K562 (cell line): ENCODE measurements at regions of chr3 and their contacts with region 1.

Region 1: DNA sequence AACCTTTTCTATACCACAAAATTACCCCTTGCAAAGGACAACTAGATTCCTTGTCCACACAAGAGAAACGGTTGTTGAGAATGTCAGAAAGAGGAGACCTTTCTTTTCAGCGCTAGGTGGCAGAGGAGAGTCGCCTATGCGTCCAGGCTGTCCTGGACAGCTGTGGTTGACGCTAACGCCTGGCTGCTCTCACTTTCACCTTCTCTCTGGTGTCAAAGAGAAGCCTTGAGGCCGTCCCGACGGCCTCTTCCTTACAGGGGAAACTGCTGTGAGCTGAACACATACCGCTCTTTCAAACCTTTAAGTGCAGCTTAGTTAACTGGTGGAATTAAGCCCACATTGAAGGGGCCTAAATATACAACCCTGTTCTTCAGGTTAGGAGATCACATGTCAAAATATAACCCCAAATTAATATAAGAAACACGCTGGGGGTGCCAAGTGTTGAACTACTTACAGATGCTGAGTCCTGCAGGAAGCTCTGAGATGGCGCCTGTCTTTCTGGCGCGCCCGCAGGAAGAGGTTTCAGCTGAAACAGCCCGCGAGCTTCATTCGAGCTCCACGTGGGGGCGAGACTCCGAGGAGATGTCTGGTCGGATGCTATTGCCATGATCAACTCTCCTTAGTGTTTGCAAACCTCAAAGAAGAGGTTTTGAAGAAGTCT is 26.1 kb upstream of the KBTBD8 start:
- DNase-seq: peak; percentile 60 to 85 (median 65)
- ATAC-seq: peak; percentile 99
- H3K4me3 ChIP-seq: peak overlapping the region; percentile 17; the same call in 1 of the 2 replicates
- H3K27ac ChIP-seq: no peak overlapping the region
- H3K4me1 ChIP-seq: peaks cover 0 to 3% of the 10 kb centered on the region in 2 experiments; a peak in 1 of 5 replicates
- H3K27me3 ChIP-seq: no peaks in the 10 kb centered on the region; a peak in 1 of 5 replicates
- CTCF ChIP-seq: peak; percentile 76 to 84 (median 80)
- EP300 ChIP-seq: no peak
- POLR2A ChIP-seq: no peak
- RAD21 ChIP-seq: peak; percentile 85 to 91

Region 2: GRCh38 chr3:66362541-66362941 is 609.5 kb before region 1 on chr3:
- CTCF ChIA-PET with region 1: no interaction called
- POLR2A ChIA-PET with region 1: no interaction called
- in situ Hi-C with region 1: no loop called
- intact Hi-C with region 1: no loop called
- DNase-seq: no peak
- ATAC-seq: no peak
- H3K4me3 ChIP-seq: no peak overlapping the region
- H3K27ac ChIP-seq: no peak overlapping the region
- H3K4me1 ChIP-seq: no peaks in the 10 kb centered on the region
- H3K27me3 ChIP-seq: no peaks in the 10 kb centered on the region
- CTCF ChIP-seq: no peak
- EP300 ChIP-seq: no peak
- POLR2A ChIP-seq: no peak
- RAD21 ChIP-seq: no peak

Region 3: GRCh38 chr3:66989860-66990665 is 18.0 kb after region 1 on chr3:
- CTCF ChIA-PET with region 1: no interaction called
- POLR2A ChIA-PET with region 1: interaction called, 4 read pairs
- in situ Hi-C with region 1: no loop called
- intact Hi-C with region 1: loop called (anchors 2 kb)
- DNase-seq: peak; percentile 20 to 40 (median 25)
- ATAC-seq: peak; percentile 85
- H3K4me3 ChIP-seq: no peak overlapping the region
- H3K27ac ChIP-seq: 0 out of 3 replicates have a peak overlapping the region, but pooled peaks have one; percentile 14
- H3K4me1 ChIP-seq: peaks cover 0 to 13% of the 10 kb centered on the region in 2 experiments; a peak in 2 of 5 replicates
- H3K27me3 ChIP-seq: no peaks in the 10 kb centered on the region
- CTCF ChIP-seq: peak in 2 of 3 experiments; percentile 44 to 68; a peak in 3 of 6 replicates
- EP300 ChIP-seq: no peak
- POLR2A ChIP-seq: no peak
- RAD21 ChIP-seq: peak; percentile 74 to 83

Region 4: GRCh38 chr3:67037615-67038014 is 65.6 kb after region 1 on chr3:
- CTCF ChIA-PET with region 1: interaction called, 22 read pairs
- POLR2A ChIA-PET with region 1: no interaction called
- in situ Hi-C with region 1: loop called (anchors 10 kb)
- intact Hi-C with region 1: loop called (anchors 1 kb)
- DNase-seq: peak in 1 of 4 experiments; percentile 33
- ATAC-seq: peak; percentile 89
- H3K4me3 ChIP-seq: no peak overlapping the region
- H3K27ac ChIP-seq: no peak overlapping the region
- H3K4me1 ChIP-seq: peaks cover 0 to 8% of the 10 kb centered on the region in 2 experiments; a peak in 4 of 5 replicates
- H3K27me3 ChIP-seq: no peaks in the 10 kb centered on the region
- CTCF ChIP-seq: peak in 1 of 3 experiments; percentile 58; a peak in 2 of 6 replicates
- EP300 ChIP-seq: no peak
- POLR2A ChIP-seq: no peak
- RAD21 ChIP-seq: peak; percentile 80 to 85

Region 5: GRCh38 chr3:67044295-67044694 is 72.3 kb after region 1 on chr3:
- CTCF ChIA-PET with region 1: no interaction called
- POLR2A ChIA-PET with region 1: no interaction called
- in situ Hi-C with region 1: loop called (anchors 10 kb)
- intact Hi-C with region 1: loop called (anchors 2 kb)
- DNase-seq: no peak
- ATAC-seq: no peak
- H3K4me3 ChIP-seq: no peak overlapping the region
- H3K27ac ChIP-seq: no peak overlapping the region
- H3K4me1 ChIP-seq: no peaks in the 10 kb centered on the region
- H3K27me3 ChIP-seq: no peaks in the 10 kb centered on the region
- CTCF ChIP-seq: no peak
- EP300 ChIP-seq: no peak
- POLR2A ChIP-seq: no peak
- RAD21 ChIP-seq: no peak

Region 6: DNA sequence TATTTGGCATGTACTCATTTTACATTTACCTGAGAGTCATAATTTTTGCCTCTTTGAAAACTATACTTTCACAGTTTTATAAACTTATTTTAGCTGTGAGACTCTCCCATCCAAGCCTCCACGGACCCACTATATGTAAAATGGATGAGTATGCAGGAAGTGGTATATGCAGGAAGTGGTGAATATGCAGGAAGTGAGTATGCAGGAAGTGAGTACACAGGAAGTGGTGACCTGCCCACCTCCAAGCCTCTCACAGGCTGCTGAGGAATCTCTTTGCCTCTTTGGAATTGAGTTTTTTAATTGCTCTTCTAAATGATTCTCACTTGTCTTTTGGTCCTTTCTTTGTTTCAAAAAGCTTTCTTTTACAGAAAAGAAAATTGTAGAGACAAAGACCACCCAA is 111.3 kb after region 1 on chr3:
- CTCF ChIA-PET with region 1: no interaction called
- POLR2A ChIA-PET with region 1: no interaction called
- in situ Hi-C with region 1: no loop called
- intact Hi-C with region 1: no loop called
- DNase-seq: peak in 1 of 4 experiments; percentile 2
- ATAC-seq: no peak
- H3K4me3 ChIP-seq: no peak overlapping the region
- H3K27ac ChIP-seq: no peak overlapping the region
- H3K4me1 ChIP-seq: no peaks in the 10 kb centered on the region
- H3K27me3 ChIP-seq: no peaks in the 10 kb centered on the region
- CTCF ChIP-seq: no peak
- EP300 ChIP-seq: no peak
- POLR2A ChIP-seq: no peak
- RAD21 ChIP-seq: no peak

Region 7: GRCh38 chr3:67113802-67114407 is 141.9 kb after region 1 on chr3:
- CTCF ChIA-PET with region 1: no interaction called
- POLR2A ChIA-PET with region 1: interaction called, 3 read pairs
- in situ Hi-C with region 1: no loop called
- intact Hi-C with region 1: loop called (anchors 5 kb)
- DNase-seq: peak; percentile 65 to 81 (median 74)
- ATAC-seq: peak; percentile 98
- H3K4me3 ChIP-seq: no peak overlapping the region
- H3K27ac ChIP-seq: no peak overlapping the region
- H3K4me1 ChIP-seq: no peaks in the 10 kb centered on the region
- H3K27me3 ChIP-seq: no peaks in the 10 kb centered on the region
- CTCF ChIP-seq: peak; percentile 82 to 92 (median 86)
- EP300 ChIP-seq: no peak
- POLR2A ChIP-seq: no peak
- RAD21 ChIP-seq: peak; percentile 63 to 84; a peak in 3 of 4 replicates

Region 8: DNA sequence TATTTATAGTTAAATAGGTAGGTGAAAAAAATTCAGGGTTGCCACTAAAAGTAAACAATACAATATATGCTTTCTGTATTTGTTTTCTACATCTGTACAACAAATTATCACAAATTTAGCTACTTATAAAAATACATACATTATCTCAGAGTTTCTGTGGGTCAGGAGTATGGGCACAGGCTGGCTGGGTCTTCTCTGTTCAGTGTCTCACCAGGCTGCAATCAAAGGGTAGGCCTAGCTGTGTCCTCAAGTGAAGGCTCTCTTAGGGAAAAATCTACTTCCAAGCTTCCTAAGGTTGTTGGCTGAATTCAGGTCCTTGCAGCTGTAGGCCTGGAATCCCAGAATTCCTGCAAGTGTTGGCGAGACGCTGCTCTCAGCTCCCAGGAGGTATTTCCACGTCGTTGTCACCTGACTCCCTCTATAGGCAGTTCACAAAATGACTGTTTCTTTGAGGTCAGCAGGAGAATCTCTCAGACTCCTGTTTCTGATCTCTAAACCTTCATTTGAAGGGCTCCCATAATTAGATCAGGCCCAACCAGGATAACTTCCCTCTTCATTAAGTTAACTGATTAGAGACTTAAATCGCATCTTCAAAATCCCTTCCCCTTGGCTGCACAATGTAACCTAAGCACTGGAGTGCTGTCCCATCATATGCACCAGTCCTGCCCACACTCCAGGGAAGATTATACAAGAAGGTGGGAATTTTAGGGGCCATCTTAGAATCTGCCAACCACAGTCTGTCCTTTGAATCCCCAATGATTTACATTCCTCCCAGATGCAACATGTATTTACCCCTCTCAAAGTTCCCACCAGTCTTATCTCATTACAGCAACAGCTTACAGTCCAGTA is 385.8 kb after region 1 on chr3:
- CTCF ChIA-PET with region 1: no interaction called
- POLR2A ChIA-PET with region 1: no interaction called
- in situ Hi-C with region 1: no loop called
- intact Hi-C with region 1: loop called (anchors 5 kb)
- DNase-seq: peak in 2 of 4 experiments; percentile 13 to 28
- ATAC-seq: peak; percentile 76
- H3K4me3 ChIP-seq: no peak overlapping the region
- H3K27ac ChIP-seq: no peak overlapping the region
- H3K4me1 ChIP-seq: peaks cover 0 to 6% of the 10 kb centered on the region in 2 experiments; a peak in 1 of 5 replicates
- H3K27me3 ChIP-seq: no peaks in the 10 kb centered on the region
- CTCF ChIP-seq: peak; percentile 35 to 49 (median 37); a peak in 5 of 6 replicates
- EP300 ChIP-seq: no peak
- POLR2A ChIP-seq: no peak
- RAD21 ChIP-seq: peak in 1 of 2 experiments; percentile 45; a peak in 2 of 4 replicates